Uterus (tissue), 4 donors: ENCODE measurements at regions of chr2 and their contacts with region 1.

Region 1: DNA sequence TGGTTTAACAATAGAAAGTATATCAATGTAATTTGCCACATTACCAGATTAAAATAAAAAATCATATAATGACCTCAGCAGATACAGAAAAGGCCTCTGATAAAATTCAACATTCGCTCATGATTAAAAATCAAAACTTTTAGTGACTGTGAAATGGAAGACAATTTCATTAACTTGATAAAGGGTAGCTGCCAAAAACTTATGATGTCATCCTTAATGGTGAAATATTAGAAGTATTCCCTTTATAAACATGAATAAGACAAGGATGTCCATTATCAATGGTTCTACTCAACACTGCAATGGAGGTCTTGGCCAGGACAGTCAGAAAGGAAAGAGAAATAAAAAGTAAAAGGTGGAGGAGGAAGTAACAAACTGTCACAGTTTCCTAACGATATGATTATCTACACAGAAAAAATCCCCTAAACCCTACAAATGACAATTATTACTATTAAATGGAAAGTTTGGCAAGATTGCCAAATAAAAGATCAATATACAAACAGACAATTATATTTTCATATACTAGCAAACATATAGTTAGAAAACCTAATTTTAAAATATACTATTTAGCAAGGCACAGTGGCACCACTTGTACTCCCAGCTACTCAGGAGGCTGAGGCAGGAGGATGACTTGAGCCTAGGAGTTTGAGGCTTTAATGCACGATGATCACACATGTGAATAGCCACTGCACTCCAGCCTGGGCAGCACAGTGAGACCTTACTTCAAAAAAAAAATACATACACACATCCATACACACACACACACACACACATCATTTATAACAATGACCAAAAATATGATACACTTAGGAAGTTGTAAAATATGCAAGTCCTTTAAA is 12.8 kb downstream of the METTL8 start:
- DNase-seq: no peak
- H3K4me3 ChIP-seq: no peak overlapping the region
- H3K27ac ChIP-seq: no peak overlapping the region
- H3K4me1 ChIP-seq: no peaks in the 10 kb centered on the region
- H3K27me3 ChIP-seq: no peaks in the 10 kb centered on the region
- CTCF ChIP-seq: no peak
- POLR2A ChIP-seq: no peak

Region 2: DNA sequence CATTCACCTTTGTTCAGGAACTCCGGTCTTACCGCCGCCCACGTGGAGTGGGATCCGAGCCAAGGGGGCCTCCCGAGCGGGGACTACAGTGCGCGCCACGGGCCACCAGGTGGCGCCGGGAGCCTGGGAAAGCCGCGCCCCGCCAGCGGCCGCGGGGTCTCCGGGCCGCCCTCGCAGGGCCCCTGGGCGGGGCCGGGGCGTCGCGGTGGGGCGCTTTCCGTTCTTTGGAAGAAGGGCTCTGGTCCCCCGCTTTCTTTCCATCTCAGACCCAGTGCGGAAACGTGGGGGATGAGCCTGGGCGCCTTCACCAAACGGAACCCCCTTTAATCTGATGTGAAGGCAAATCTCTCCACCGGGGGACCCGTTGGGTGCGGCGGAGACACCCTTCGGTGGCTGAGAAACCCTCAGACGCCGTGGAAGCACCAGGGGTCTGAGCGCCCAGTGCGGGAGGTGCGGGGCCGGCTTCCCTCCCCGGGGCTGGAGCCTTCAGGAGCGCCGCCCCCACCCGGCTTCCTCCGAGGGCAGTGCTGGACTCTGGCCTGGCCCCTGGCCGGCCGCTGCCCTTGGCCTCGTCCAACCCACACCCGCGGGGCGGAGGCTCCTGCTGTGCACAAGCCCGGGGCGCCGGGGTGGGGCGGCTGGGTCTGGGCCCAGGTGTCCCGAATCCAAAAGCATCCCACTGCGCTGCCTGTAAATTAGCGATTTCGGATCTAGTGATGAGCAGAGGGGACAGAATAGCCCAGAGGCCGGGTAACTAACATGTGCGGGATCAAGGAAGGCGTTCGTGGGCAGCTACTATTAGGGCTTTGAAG is 447.2 kb before region 1 on chr2:
- intact Hi-C with region 1: loop called (anchors 5 kb)
- DNase-seq: peak; percentile 80 to 87
- H3K4me3 ChIP-seq: peak overlapping the region; percentile 63 to 71
- H3K27ac ChIP-seq: peak overlapping the region; percentile 86 to 88
- H3K4me1 ChIP-seq: no peaks in the 10 kb centered on the region
- H3K27me3 ChIP-seq: no peaks in the 10 kb centered on the region
- CTCF ChIP-seq: peak; percentile 85 to 99 (median 98)
- POLR2A ChIP-seq: peak; percentile 39 to 49

Region 3: GRCh38 chr2:171365232-171365631 is 55.7 kb before region 1 on chr2:
- intact Hi-C with region 1: no loop called
- DNase-seq: no peak
- H3K4me3 ChIP-seq: no peak overlapping the region
- H3K27ac ChIP-seq: no peak overlapping the region
- H3K4me1 ChIP-seq: no peaks in the 10 kb centered on the region
- H3K27me3 ChIP-seq: no peaks in the 10 kb centered on the region
- CTCF ChIP-seq: no peak
- POLR2A ChIP-seq: no peak